Natural killer cell (primary cell): ENCODE measurements at regions of chr13 and their contacts with region 1.

Region 1: DNA sequence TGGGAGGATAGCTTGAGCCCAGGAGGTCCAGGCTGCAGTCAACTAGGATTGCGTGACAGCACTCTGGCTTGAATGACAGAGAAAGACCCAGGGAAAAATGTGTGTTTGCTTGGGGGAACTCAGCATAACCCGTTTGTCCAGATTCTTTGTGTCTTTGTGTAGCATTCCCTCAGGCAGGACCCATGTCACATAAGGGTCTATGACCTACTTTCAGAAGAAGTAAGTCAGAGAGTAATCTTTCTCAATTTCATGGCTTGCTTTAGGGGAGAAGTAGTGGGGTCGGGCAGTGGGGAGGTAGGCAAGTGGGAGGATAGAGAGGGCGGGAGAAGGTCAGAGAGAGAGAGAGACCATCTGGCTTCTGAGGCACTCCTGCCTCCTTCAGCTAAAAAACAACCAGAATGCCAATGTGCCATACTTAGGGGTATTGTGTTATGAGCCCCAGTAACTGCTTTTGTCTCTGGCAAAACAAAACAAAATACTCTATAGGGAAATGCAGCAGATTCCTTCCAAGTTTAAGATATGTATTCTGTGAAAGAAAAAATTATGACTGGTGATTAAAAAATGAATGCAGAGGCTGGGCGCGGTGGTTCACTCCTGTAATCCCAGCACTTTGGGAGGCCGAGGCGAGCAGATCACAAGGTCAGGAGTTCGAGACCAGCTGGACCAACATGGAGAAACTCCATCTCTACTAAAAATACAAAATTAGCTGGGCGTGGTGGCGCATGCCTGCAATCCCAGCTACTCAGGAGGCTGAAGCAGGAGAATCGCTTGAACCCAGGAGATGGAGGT is 12.1 kb upstream of the PSPC1 start:
- DNase-seq: no peak
- ATAC-seq: no peak
- H3K4me3 ChIP-seq: no peak overlapping the region
- H3K4me3 Mint-ChIP-seq: no peak overlapping the region
- H3K27ac ChIP-seq: no peak overlapping the region
- H3K27ac Mint-ChIP-seq: no peak overlapping the region
- H3K4me1 ChIP-seq: no peaks in the 10 kb centered on the region
- H3K4me1 Mint-ChIP-seq: no peaks in the 10 kb centered on the region
- H3K27me3 ChIP-seq: no peaks in the 10 kb centered on the region
- H3K27me3 Mint-ChIP-seq: no peaks in the 10 kb centered on the region
- CTCF ChIP-seq: no peak

Region 2: GRCh38 chr13:19852766-19853165 is 57.9 kb after region 1 on chr13:
- intact Hi-C with region 1: loop called (anchors 5 kb)
- DNase-seq: no peak
- ATAC-seq: no peak
- H3K4me3 ChIP-seq: no peak overlapping the region
- H3K4me3 Mint-ChIP-seq: no peak overlapping the region
- H3K27ac ChIP-seq: no peak overlapping the region
- H3K27ac Mint-ChIP-seq: peak overlapping the region in 1 of 2 donors; percentile 53
- H3K4me1 ChIP-seq: no peaks in the 10 kb centered on the region
- H3K4me1 Mint-ChIP-seq: peaks cover 15 to 28% of the 10 kb centered on the region in 2 donors
- H3K27me3 ChIP-seq: no peaks in the 10 kb centered on the region
- H3K27me3 Mint-ChIP-seq: no peaks in the 10 kb centered on the region
- CTCF ChIP-seq: no peak